Endothelial cell of umbilical vein (primary cell): ENCODE measurements at regions of chr6 and their contacts with region 1.

Region 1: GRCh38 chr6:16238057-16238962 is at the start of gene GMPR:
- DNase-seq: peak; percentile 81
- H3K4me3 ChIP-seq: peak within 1 kb of the TSS; percentile 63 to 97 (median 73)
- H3K27ac ChIP-seq: peak within 1 kb of the TSS; percentile 75
- H3K4me1 ChIP-seq: peaks cover 32% of the 10 kb centered on the region
- H3K27me3 ChIP-seq: no peaks in the 10 kb centered on the region
- CTCF ChIP-seq: no peak
- POLR2A ChIP-seq: no peak
- total RNA-seq, gene GMPR: 36.3 and 43.2 TPM in 2 replicates

Region 2: DNA sequence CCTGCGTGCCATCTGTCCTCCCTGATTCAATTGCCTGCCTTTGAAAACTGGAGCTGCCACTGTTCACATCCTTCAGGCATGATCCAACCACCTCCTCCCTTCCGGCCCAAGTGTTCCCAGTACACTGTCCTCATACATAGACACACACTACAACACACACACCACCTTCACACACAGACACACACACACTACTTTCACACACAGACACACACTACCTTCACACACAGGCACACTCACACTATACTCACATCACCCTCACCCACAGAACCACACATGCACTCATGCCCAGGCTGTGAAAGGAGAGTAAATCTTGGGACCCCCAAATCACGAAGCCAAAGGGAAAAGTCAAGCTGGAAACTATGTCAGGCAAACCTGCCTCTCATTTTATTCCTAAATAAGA is 218.8 kb before region 1 on chr6:
- CTCF ChIA-PET with region 1: no interaction called
- POLR2A ChIA-PET with region 1: no interaction called
- dilution Hi-C with region 1: no loop called
- intact Hi-C with region 1: no loop called
- DNase-seq: no peak
- H3K4me3 ChIP-seq: no peak overlapping the region
- H3K27ac ChIP-seq: no peak overlapping the region
- H3K4me1 ChIP-seq: no peaks in the 10 kb centered on the region
- H3K27me3 ChIP-seq: no peaks in the 10 kb centered on the region
- CTCF ChIP-seq: no peak
- POLR2A ChIP-seq: no peak

Region 3: DNA sequence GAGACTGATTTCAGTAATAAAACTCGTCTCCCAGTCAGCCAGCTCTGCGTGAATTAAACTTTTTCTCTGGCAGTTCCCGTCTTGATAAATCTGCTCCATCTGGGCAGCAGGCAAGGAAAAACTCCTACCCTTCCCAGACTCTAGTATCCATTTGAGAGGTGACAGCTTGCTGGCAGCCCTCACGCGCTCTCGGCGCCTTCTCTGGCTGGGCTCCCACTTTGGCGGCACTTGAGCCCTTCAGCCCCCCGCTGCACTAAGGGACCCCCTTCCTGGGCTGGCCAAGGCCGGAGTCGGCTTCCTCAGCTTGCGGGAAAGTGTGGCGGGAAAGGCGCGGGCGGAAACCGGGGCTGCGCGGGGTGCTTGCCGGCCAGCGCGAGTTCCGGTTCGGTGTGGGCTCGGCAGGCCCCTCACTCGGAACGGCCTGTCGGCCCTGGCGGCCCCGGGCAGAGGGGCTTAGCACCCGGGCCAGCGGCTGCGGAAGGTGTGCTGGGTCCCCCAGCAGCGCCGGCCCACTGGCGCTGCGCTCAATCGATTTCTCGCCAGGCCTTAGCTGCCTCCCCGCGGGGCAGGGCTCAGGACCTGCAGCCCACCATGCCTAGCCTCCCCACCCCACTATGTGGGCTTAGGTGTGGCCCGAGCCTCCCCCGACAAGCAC is 21.7 kb before region 1 on chr6:
- CTCF ChIA-PET with region 1: interaction called, 29 read pairs
- POLR2A ChIA-PET with region 1: interaction called, 3 read pairs
- dilution Hi-C with region 1: no loop called
- intact Hi-C with region 1: loop called (anchors 1 kb)
- DNase-seq: peak; percentile 41
- H3K4me3 ChIP-seq: no peak overlapping the region
- H3K27ac ChIP-seq: peak overlapping the region; percentile 99
- H3K4me1 ChIP-seq: peaks cover 28% of the 10 kb centered on the region
- H3K27me3 ChIP-seq: no peaks in the 10 kb centered on the region
- CTCF ChIP-seq: no peak
- POLR2A ChIP-seq: no peak

Region 4: GRCh38 chr6:16222826-16223225 is 15.5 kb before region 1 on chr6:
- CTCF ChIA-PET with region 1: interaction called, 18 read pairs
- POLR2A ChIA-PET with region 1: no interaction called
- dilution Hi-C with region 1: no loop called
- intact Hi-C with region 1: no loop called
- DNase-seq: no peak
- H3K4me3 ChIP-seq: no peak overlapping the region
- H3K27ac ChIP-seq: no peak overlapping the region
- H3K4me1 ChIP-seq: peaks cover 9% of the 10 kb centered on the region
- H3K27me3 ChIP-seq: no peaks in the 10 kb centered on the region
- CTCF ChIP-seq: no peak
- POLR2A ChIP-seq: no peak

Region 5: DNA sequence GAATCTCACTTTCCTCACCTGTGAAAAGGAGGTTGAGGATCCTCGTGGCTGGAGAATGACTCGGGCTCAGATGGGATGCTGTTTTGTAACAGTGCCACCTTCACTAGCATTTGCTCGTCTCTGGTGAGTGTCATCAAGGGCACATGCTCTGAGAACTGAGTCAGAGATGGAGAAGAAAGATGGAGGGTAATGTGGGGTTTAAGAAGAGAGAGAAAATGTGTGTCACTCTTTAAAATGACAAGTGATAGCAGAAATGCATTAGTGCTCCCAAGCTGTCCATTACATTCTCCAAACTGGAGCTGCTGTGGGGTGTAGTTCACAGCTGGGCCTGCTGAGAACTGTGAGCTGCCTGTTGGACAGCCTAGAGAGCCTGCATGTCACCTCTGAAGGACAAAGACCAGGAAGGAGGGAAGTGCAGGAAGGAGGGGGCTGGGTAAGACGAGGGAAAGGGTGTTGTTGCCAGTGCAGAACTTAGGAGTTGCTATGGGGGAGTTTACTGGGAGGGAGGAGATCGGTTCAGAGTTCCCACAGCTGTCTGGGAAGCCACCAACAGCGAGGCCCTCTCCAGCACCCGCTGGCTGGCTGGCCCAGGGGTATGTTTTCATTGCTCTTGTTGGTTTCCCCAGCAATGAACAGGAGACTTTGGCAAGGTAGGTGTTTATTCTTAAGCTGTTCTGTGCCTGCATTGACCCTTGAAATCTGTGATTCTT is 19.8 kb after region 1 on chr6:
- CTCF ChIA-PET with region 1: interaction called, 7 read pairs
- POLR2A ChIA-PET with region 1: no interaction called
- dilution Hi-C with region 1: no loop called
- intact Hi-C with region 1: loop called (anchors 1 kb)
- DNase-seq: peak; percentile 55
- H3K4me3 ChIP-seq: no peak overlapping the region
- H3K27ac ChIP-seq: no peak overlapping the region
- H3K4me1 ChIP-seq: peaks cover 10% of the 10 kb centered on the region
- H3K27me3 ChIP-seq: no peaks in the 10 kb centered on the region
- CTCF ChIP-seq: peak in 1 of 2 donors; percentile 6
- POLR2A ChIP-seq: no peak

Region 6: DNA sequence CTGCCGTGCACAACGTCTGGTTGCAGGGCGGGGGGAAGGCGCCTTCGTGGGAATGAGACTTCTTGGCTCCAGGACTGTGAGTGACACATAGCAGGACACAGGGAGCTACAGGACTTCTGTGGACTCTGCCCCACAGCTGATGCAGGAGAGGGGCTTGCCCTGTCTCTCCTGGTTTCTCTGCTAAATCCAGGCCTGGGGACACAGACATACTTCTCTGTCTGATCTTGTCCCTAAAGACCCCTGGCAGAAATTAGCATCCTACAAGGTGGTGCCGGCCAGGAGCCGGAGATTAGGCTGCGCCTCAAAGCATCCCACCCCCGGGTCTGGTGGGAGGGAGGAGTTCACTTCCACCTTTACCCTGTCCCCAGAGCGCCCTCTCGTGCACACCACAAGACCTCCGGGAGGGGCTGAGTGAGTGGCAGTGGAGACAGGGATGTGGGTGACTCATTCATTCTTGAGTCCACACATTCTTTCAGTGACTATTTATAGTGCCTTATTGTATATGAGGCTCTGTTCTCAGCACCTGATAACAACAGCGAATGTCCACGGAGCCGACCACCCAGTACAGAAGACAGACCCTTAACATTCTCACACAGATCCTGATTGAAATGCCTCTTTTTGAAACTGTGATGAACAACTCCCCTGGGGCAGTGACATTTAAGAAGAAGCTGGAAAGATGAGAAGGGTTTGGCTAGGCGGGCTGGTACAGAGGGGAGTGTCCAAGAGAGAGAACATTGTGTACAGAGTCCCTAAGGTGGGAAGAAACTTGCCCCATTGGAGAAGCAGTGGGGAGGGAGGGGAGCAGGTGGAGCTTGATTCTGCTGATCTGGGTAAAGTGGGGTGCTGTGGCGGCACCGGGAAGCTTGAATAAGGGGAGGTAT is 39.0 kb after region 1 on chr6:
- CTCF ChIA-PET with region 1: interaction called, 35 read pairs
- POLR2A ChIA-PET with region 1: no interaction called
- dilution Hi-C with region 1: no loop called
- intact Hi-C with region 1: loop called (anchors 1 kb)
- DNase-seq: peak; percentile 96
- H3K4me3 ChIP-seq: no peak overlapping the region
- H3K27ac ChIP-seq: peak overlapping the region; percentile 73
- H3K4me1 ChIP-seq: peaks cover 9% of the 10 kb centered on the region
- H3K27me3 ChIP-seq: no peaks in the 10 kb centered on the region
- CTCF ChIP-seq: peak; percentile 79 to 80
- POLR2A ChIP-seq: no peak

Region 7: DNA sequence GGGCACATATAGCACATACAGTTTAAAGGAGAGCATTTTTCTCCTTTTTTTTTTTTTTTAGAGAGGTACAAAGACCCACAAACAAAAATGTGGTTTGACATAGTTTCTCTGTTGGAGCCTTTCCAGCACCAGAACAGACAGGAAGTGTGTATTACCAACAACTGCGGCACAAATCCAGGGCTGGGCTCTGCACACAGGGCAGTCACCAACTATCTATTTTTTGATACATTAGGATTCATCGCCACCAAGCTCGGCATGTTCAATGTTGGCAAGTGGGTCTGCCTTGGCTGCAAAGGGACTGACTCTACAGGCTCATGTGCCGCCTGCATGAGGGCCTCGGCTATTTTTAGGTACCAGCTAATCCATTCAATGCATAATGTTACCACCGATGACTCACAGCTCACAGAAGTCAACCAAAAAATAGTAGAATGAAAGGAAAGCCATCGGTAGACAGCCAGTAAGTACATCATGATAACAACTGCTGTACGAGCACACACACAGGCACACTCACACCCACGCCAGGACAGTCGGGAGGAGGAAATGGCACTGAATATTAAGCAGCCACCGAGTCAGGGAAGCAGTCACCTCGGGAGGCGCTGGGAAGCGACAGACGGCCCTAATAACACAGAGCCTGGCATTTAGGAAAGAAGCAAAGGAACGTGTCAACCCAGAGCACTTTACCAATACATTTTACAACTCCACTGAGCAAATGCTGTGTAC is 81.7 kb after region 1 on chr6:
- CTCF ChIA-PET with region 1: no interaction called
- POLR2A ChIA-PET with region 1: no interaction called
- dilution Hi-C with region 1: no loop called
- intact Hi-C with region 1: loop called (anchors 2 kb)
- DNase-seq: peak; percentile 95
- H3K4me3 ChIP-seq: peak overlapping the region in 1 of 3 experiments; percentile 43
- H3K27ac ChIP-seq: peak overlapping the region; percentile 87
- H3K4me1 ChIP-seq: peaks cover 15% of the 10 kb centered on the region
- H3K27me3 ChIP-seq: no peaks in the 10 kb centered on the region
- CTCF ChIP-seq: no peak
- POLR2A ChIP-seq: no peak